Activated B cell treated with CpG ODN at 0.5 μM for 24 hours (primary cell): ENCODE measurements at regions of chr1 and their contacts with region 1.

Region 1: GRCh38 chr1:236064674-236065508 is at the start of gene NID1:
- DNase-seq: peak; percentile 38
- ATAC-seq: peak; percentile 18
- H3K4me3 Mint-ChIP-seq: peak within 1 kb of the TSS; percentile 70
- H3K27ac Mint-ChIP-seq: no peak within 1 kb of the TSS
- H3K4me1 Mint-ChIP-seq: peaks cover 33% of the 10 kb centered on the region
- H3K27me3 Mint-ChIP-seq: peaks cover 25% of the 10 kb centered on the region
- CTCF ChIP-seq: no peak
- total RNA-seq, gene NID1: 0.04 and 0.10 TPM in 2 replicates

Region 2: DNA sequence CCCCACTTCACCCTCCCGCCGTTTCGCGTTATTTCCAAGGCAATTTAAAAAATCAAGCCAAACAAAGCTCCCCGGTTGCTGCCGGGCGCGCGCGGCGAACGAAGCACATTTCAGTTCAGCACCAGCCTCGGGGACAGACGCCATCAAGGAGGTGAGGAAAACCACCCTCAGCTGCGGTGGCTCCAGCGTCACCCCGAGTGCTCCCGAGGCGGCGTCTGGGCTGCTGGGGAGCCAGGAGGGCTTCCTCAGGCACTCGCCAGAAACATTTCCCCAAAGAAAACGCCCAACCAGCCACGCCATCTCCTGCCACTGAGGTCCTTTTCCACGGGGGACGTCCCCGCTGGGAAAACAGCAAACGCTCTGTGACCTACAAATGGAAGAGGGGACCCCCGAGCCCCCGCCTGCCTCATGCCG is 415.9 kb before region 1 on chr1:
- CTCF ChIA-PET with region 1: no interaction called
- POLR2A ChIA-PET with region 1: no interaction called
- intact Hi-C with region 1: loop called (anchors 10 kb)
- DNase-seq: peak; percentile 40
- ATAC-seq: peak; percentile 65
- H3K4me3 Mint-ChIP-seq: peak overlapping the region; percentile 88
- H3K27ac Mint-ChIP-seq: no peak overlapping the region
- H3K4me1 Mint-ChIP-seq: peaks cover 15% of the 10 kb centered on the region
- H3K27me3 Mint-ChIP-seq: peaks cover 62% of the 10 kb centered on the region
- CTCF ChIP-seq: no peak

Region 3: GRCh38 chr1:235855811-235856429 is 209.0 kb before region 1 on chr1:
- CTCF ChIA-PET with region 1: no interaction called
- POLR2A ChIA-PET with region 1: no interaction called
- intact Hi-C with region 1: no loop called
- DNase-seq: no peak
- ATAC-seq: peak; percentile 40
- H3K4me3 Mint-ChIP-seq: no peak overlapping the region
- H3K27ac Mint-ChIP-seq: peak overlapping the region; percentile 54
- H3K4me1 Mint-ChIP-seq: peaks cover 56% of the 10 kb centered on the region
- H3K27me3 Mint-ChIP-seq: no peaks in the 10 kb centered on the region
- CTCF ChIP-seq: no peak

Region 4: DNA sequence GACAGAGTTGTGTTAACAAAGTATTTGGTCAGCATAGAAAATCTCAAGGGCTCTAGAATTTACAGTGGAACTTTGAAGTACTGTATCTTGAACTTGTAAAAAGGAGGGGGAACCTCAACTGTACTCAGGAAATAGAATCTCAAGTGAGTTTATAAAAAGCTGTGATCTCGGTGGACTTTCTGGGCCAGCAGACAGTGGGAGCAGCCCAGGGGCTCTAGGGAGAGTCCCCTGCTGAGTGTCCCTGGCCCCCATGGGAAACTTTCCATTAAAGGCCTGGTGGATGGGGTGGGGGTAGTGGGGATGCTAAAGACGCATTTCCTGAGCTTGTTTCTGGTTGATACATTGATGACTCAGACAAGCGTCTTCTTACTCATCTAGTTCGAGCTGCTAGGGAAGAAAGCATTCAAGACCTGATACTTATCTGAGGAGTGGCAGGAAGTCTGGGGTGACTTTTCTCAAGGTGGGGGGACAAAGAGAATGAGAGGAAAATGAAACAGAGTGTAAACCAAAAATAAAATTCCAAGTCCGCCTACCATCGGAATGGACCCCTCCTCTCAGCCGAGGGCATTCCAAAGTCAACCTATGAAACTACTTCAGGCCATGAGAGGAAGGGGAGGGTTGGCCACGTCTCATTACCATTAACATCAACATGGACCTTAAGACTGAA is 65.5 kb before region 1 on chr1:
- CTCF ChIA-PET with region 1: no interaction called
- POLR2A ChIA-PET with region 1: interaction called, 5 read pairs
- intact Hi-C with region 1: loop called (anchors 2 kb)
- DNase-seq: no peak
- ATAC-seq: peak; percentile 89
- H3K4me3 Mint-ChIP-seq: peak overlapping the region; percentile 58
- H3K27ac Mint-ChIP-seq: peak overlapping the region; percentile 89
- H3K4me1 Mint-ChIP-seq: peaks cover 15% of the 10 kb centered on the region
- H3K27me3 Mint-ChIP-seq: peaks cover 3% of the 10 kb centered on the region
- CTCF ChIP-seq: no peak

Region 5: GRCh38 chr1:236795035-236795756 is 730.3 kb after region 1 on chr1 and contains the start of gene MTR:
- CTCF ChIA-PET with region 1: no interaction called
- POLR2A ChIA-PET with region 1: no interaction called
- intact Hi-C with region 1: loop called (anchors 2 kb)
- DNase-seq: peak; percentile 91
- ATAC-seq: peak; percentile 94
- H3K4me3 Mint-ChIP-seq: peak within 1 kb of the TSS; percentile 97
- H3K27ac Mint-ChIP-seq: peak within 1 kb of the TSS; percentile 98
- H3K4me1 Mint-ChIP-seq: peaks cover 41% of the 10 kb centered on the region
- H3K27me3 Mint-ChIP-seq: peaks cover 2% of the 10 kb centered on the region
- CTCF ChIP-seq: no peak
- total RNA-seq, gene MTR: 31.2 and 37.1 TPM in 2 replicates